Naive thymus-derived CD4-positive, alpha-beta T cell (primary cell): ENCODE measurements at regions of chr7 and their contacts with region 1.

Region 1: DNA sequence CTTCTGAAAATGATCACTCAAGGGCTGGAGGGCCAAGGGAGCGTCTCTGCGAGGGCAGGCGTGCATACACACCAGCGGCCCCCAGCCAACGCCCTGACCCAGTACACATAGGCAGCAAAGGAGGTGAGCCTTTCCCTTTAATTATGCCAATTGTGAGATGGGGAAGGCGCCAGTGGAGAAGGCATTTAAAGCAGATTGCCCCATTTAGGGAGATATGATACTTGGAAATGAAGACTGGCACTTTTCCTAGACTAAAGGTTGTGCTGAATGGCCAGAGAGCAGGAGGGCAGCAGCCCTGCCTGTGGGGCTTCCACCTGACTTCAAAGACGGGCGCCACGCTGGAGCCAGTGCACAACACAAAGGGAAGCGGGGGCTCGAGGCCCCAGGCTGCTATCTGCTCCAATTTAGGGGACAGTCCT is 24.1 kb downstream of the HIPK2 start:
- DNase-seq: no peak
- ATAC-seq: no peak
- H3K4me3 ChIP-seq: no peak overlapping the region
- H3K4me3 Mint-ChIP-seq: peak overlapping the region in 1 of 10 donors; percentile 56
- H3K27ac ChIP-seq: no peak overlapping the region
- H3K27ac Mint-ChIP-seq: peak overlapping the region in 3 of 9 donors; percentile 4 to 60 (median 28)
- H3K4me1 ChIP-seq: no peaks in the 10 kb centered on the region
- H3K4me1 Mint-ChIP-seq: peaks cover 36 to 99% (median 85%) of the 10 kb centered on the region in 7 donors
- H3K27me3 ChIP-seq: no peaks in the 10 kb centered on the region
- H3K27me3 Mint-ChIP-seq: no peaks in the 10 kb centered on the region

Region 2: GRCh38 chr7:138459413-138460175 is 1294.1 kb before region 1 on chr7:
- CTCF ChIA-PET with region 1: no interaction called
- POLR2A ChIA-PET with region 1: no interaction called
- intact Hi-C with region 1: no loop called
- DNase-seq: peak; percentile 95 to 99 (median 98)
- ATAC-seq: peak; percentile 92
- H3K4me3 ChIP-seq: peak overlapping the region; percentile 35
- H3K4me3 Mint-ChIP-seq: peak overlapping the region; percentile 78 to 96 (median 87)
- H3K27ac ChIP-seq: peak overlapping the region; percentile 34
- H3K27ac Mint-ChIP-seq: peak overlapping the region; percentile 0 to 83 (median 61)
- H3K4me1 ChIP-seq: peaks cover 6 to 9% of the 10 kb centered on the region in 2 donors
- H3K4me1 Mint-ChIP-seq: peaks cover 14 to 38% (median 31%) of the 10 kb centered on the region in 7 donors
- H3K27me3 ChIP-seq: no peaks in the 10 kb centered on the region
- H3K27me3 Mint-ChIP-seq: peaks cover 0 to 2% (median 0%) of the 10 kb centered on the region in 5 donors

Region 3: GRCh38 chr7:139169801-139170200 is 583.9 kb before region 1 on chr7:
- CTCF ChIA-PET with region 1: no interaction called
- POLR2A ChIA-PET with region 1: no interaction called
- intact Hi-C with region 1: no loop called
- DNase-seq: no peak
- ATAC-seq: no peak
- H3K4me3 ChIP-seq: no peak overlapping the region
- H3K4me3 Mint-ChIP-seq: no peak overlapping the region
- H3K27ac ChIP-seq: no peak overlapping the region
- H3K27ac Mint-ChIP-seq: no peak overlapping the region
- H3K4me1 ChIP-seq: no peaks in the 10 kb centered on the region
- H3K4me1 Mint-ChIP-seq: peaks cover 0 to 2% (median 0%) of the 10 kb centered on the region in 7 donors
- H3K27me3 ChIP-seq: no peaks in the 10 kb centered on the region
- H3K27me3 Mint-ChIP-seq: no peaks in the 10 kb centered on the region

Region 4: GRCh38 chr7:139767561-139767982 is 13.9 kb after region 1 on chr7:
- CTCF ChIA-PET with region 1: interaction called, 4 read pairs
- POLR2A ChIA-PET with region 1: interaction called, 3 read pairs
- intact Hi-C with region 1: loop called in 1 of 2 experiments (anchors 1 kb)
- DNase-seq: peak in 7 of 9 donors; percentile 30 to 77 (median 66)
- ATAC-seq: peak; percentile 76
- H3K4me3 ChIP-seq: peak overlapping the region; percentile 48
- H3K4me3 Mint-ChIP-seq: peak overlapping the region; percentile 43 to 88 (median 69)
- H3K27ac ChIP-seq: peak overlapping the region; percentile 66
- H3K27ac Mint-ChIP-seq: peak overlapping the region; percentile 80 to 97 (median 91)
- H3K4me1 ChIP-seq: peaks cover 33 to 60% of the 10 kb centered on the region in 2 donors
- H3K4me1 Mint-ChIP-seq: peaks cover 58 to 98% (median 90%) of the 10 kb centered on the region in 7 donors
- H3K27me3 ChIP-seq: no peaks in the 10 kb centered on the region
- H3K27me3 Mint-ChIP-seq: no peaks in the 10 kb centered on the region